ENCODE measurements at regions of chr11 and their contacts with region 1.

Region 1: GRCh38 chr11:83063073-83063754 is 8.5 kb downstream of the RAB30 start:
- DNase-seq: peak; percentile 96
- H3K4me3 ChIP-seq: peak overlapping the region; percentile 62
- H3K27ac ChIP-seq: peak overlapping the region; percentile 100
- H3K4me1 ChIP-seq: peaks cover 95% of the 10 kb centered on the region
- CTCF ChIP-seq: no peak

Region 2: GRCh38 chr11:82969811-82970210 is 93.4 kb before region 1 on chr11:
- CTCF ChIA-PET with region 1: no interaction called
- POLR2A ChIA-PET with region 1: interaction called, 6 read pairs
- intact Hi-C with region 1: loop called (anchors 1 kb)
- DNase-seq: peak; percentile 94
- H3K4me3 ChIP-seq: peak overlapping the region; percentile 33
- H3K27ac ChIP-seq: peak overlapping the region; percentile 98
- H3K4me1 ChIP-seq: peaks cover 88% of the 10 kb centered on the region
- CTCF ChIP-seq: no peak

Region 3: DNA sequence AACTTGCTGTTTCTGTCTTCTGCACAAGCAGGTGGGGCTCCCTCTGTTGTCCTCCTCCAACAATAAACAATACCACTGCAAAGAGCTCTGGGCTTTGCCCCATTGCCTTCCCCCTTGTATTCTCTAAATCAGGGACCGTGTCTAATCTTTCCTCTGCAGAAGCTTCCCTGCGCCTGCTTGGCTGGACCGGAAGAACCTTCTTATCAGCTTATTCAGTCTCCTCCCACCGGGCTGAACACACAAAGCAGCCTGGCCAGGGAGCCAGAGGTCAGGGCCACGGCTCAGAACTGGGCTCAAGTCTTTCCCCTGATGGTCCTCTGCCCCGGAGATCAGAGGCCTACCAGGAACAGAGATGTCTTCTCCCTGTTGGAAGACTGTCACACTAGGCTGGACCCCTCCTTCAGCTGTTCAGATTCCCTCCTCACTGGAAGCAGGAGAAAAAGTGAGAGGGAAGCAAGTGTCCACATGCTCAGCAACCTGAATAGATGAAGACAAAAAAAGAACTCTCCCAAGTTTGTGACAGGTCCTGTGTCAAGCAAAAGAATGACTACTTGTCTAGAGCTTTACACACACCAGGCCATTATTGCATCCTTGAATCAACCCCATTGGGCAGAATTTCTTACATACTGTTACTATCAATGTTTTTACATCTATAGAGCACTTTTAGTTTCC is 55.2 kb before region 1 on chr11:
- CTCF ChIA-PET with region 1: no interaction called
- POLR2A ChIA-PET with region 1: interaction called, 12 read pairs
- intact Hi-C with region 1: loop called (anchors 5 kb)
- DNase-seq: peak; percentile 54
- H3K4me3 ChIP-seq: peak overlapping the region; percentile 0
- H3K27ac ChIP-seq: peak overlapping the region; percentile 47
- H3K4me1 ChIP-seq: peaks cover 49% of the 10 kb centered on the region
- CTCF ChIP-seq: peak; percentile 34; the same call in 1 of the 2 replicates

Region 4: DNA sequence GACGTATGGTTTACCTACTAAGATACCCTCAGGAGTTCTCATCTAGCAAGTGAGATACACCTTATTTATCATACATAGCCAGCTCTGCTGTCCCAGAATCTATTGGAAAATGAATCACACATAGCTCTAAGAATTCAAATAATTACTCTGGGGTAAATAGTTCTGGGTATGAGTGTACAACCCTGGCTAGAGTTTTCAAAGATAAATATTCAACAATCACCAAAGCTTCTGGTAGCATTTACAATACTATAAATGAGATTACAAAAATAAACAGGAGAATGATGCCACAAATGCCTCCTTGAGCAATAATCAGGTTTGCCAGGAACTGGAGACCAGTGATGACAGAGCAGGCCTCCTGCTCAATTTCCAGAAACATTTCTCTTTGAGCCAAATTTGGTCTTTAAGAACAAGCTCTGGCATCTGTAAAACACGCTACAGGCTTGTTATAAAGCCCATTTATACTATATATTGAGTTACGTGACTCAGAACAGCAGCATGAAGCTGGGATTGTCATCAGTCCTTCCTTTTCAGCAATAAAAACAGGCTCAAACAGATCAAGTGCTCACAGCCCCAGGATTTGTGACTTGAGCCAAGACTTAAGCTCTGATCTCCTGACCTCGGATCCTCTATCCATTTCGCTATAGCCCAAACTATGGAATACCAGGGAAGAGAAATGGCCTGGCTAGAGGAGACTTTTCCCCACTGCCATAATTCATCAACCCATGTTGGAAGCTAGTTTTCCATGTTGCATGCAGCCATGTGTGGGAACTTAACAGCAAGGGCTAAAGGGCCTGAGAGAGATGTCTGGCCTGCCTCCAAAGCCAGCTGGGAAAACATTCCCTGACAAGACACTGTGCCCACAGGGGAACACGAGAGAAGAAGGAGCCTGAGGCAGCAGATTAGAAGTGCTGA is 11.2 kb before region 1 on chr11:
- CTCF ChIA-PET with region 1: no interaction called
- POLR2A ChIA-PET with region 1: interaction called, 15 read pairs
- intact Hi-C with region 1: no loop called
- DNase-seq: no peak
- H3K4me3 ChIP-seq: no peak overlapping the region
- H3K27ac ChIP-seq: no peak overlapping the region
- H3K4me1 ChIP-seq: peaks cover 61% of the 10 kb centered on the region
- CTCF ChIP-seq: no peak